AG04449 (cell line): ENCODE measurements at regions of chr7 and their contacts with region 1.

Region 1: GRCh38 chr7:130096243-130096827 is 26.0 kb downstream of the KLHDC10 start:
- DNase-seq: no peak
- H3K4me3 ChIP-seq: no peak overlapping the region
- CTCF ChIP-seq: peak; percentile 26

Region 2: GRCh38 chr7:130084037-130084875 is 12.1 kb before region 1 on chr7:
- CTCF ChIA-PET with region 1: interaction called, 18 read pairs
- POLR2A ChIA-PET with region 1: no interaction called
- DNase-seq: no peak
- H3K4me3 ChIP-seq: no peak overlapping the region
- CTCF ChIP-seq: no peak

Region 3: DNA sequence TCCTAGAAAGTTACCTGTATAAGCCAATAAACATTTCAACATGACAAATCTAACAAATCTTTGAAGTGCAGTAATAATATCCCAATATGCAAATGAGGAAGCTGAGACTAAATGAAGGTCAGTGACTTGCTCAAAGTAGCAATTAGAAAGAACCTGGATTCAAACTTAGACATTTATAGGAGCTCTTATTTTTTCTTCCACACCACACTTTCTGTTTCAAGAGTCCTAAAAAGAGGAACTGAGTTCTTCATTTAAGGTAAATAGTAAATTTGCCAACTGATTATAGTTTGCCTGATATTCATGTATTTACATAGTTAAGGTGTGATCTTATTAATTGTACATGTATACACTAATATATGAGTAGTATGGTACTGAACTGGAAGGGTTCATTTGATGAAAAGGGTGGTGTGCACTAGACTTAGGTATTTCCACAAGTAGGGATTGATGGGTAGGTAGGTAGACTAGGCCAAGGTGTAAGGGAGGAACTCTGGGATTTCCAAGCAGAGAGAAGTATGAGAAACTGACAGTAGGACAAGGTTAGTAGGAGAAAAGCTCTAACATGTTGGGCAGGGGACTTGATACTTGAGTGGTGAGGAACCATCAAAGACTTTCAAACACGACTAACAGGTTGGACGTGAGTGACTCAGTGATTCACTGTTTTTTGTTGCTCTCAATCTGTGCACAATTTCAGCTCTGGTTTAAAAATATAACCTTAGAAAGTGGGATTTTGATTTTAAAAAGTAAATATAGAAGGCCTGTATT is 18.2 kb after region 1 on chr7:
- CTCF ChIA-PET with region 1: interaction called, 19 read pairs
- POLR2A ChIA-PET with region 1: no interaction called
- DNase-seq: no peak
- H3K4me3 ChIP-seq: no peak overlapping the region
- CTCF ChIP-seq: no peak

Region 4: DNA sequence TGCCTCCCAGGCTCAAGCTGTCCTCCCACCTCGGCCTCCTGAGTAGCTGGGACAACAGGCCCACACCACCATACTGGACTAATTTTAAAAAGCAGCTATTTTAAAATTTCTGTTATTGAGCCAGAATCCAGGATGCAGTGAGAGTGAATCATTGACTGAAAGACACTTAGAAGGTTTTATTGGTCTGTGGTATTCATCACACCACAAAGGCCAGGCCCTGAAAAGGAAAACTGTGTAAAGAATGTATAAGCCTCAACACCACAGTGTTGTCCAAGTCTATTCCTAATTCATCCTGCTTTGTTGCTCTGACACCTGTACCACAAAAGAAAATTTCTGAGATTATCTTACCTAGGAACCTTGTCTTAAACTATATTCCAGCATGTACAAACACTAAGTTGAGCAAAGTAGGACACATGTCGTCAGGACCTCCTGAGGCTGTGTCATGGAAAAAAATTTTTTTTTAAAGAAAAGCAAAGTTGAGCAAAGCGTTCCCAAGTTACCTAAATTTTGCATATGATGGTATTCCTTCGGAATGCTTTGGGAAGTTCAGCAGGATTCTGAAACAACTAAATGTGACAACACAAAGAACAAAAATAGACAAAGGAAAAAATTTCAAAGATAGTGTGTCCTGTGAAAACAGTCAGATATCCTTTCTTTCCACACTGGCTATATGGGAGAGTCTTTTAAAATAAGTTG is 1101.7 kb after region 1 on chr7:
- CTCF ChIA-PET with region 1: no interaction called
- POLR2A ChIA-PET with region 1: no interaction called
- DNase-seq: no peak
- H3K4me3 ChIP-seq: no peak overlapping the region
- CTCF ChIP-seq: no peak